CD8-positive, alpha-beta T cell (primary cell): ENCODE measurements at regions of chr4 and their contacts with region 1.

Region 1: DNA sequence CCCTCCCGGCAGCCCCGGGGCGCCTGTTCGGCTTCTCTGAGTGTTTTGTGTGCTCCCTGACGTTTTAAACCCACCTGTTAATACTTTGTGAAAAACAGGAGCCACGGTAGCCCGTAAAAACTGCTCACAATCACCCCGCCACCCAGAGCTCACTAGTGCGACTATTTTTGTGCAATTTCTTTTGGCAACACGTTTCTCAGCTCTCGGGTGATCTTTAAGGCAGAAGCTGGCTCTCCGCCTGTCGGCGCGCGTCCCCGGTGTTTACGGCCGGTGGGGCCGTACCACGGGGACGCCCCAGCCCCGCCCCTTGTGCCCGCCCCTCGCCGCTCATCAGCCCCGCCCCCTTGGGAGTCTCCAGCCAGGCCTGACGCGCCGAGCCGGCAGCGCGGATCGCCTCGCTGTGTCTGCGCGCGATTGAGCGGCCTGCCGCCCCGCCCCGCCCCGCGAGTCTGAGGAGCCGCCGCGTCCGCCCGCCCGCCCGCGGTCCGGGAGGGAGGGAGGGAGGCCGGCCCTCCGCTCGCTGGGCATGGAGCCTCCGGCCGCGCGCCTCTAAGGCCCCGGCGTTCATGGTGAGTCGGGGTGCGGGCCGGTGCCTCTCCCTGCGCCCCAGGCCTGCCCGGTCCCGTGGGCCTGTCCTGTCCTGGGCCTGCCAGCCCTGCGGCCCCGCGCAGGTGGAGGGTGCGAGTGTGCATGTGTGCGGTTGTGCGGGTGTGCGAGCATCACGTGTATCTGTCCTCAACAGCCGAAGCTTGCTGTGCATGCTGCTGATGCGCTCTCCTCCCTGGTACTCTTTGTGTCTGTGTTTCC is 56.2 kb upstream of the TADA2B start:
- DNase-seq: peak; percentile 87 to 97 (median 93)
- ATAC-seq: peak; percentile 92
- H3K4me3 ChIP-seq: peak overlapping the region; percentile 91 to 94
- H3K4me3 Mint-ChIP-seq: peak overlapping the region; percentile 94
- H3K27ac ChIP-seq: peak overlapping the region; percentile 78 to 88
- H3K27ac Mint-ChIP-seq: peak overlapping the region; percentile 98
- H3K4me1 ChIP-seq: peaks cover 55% of the 10 kb centered on the region
- H3K4me1 Mint-ChIP-seq: peaks cover 81% of the 10 kb centered on the region
- H3K27me3 ChIP-seq: no peaks in the 10 kb centered on the region
- H3K27me3 Mint-ChIP-seq: no peaks in the 10 kb centered on the region
- CTCF ChIP-seq: no peak

Region 2: GRCh38 chr4:6709230-6710114 is 277.5 kb before region 1 on chr4 and contains the start of gene MRFAP1L1:
- CTCF ChIA-PET with region 1: no interaction called
- POLR2A ChIA-PET with region 1: interaction called, 3 read pairs
- intact Hi-C with region 1: loop called in 1 of 2 experiments (anchors 2 kb)
- DNase-seq: peak; percentile 92 to 99 (median 97)
- ATAC-seq: peak; percentile 89
- H3K4me3 ChIP-seq: peak within 1 kb of the TSS; percentile 73 to 86
- H3K4me3 Mint-ChIP-seq: peak within 1 kb of the TSS; percentile 98
- H3K27ac ChIP-seq: peak within 1 kb of the TSS; percentile 79
- H3K27ac Mint-ChIP-seq: peak within 1 kb of the TSS; percentile 99
- H3K4me1 ChIP-seq: peaks cover 48% of the 10 kb centered on the region
- H3K4me1 Mint-ChIP-seq: peaks cover 65% of the 10 kb centered on the region
- H3K27me3 ChIP-seq: no peaks in the 10 kb centered on the region
- H3K27me3 Mint-ChIP-seq: no peaks in the 10 kb centered on the region
- CTCF ChIP-seq: no peak
- total RNA-seq, gene MRFAP1L1: 27.5 to 30.0 TPM

Region 3: DNA sequence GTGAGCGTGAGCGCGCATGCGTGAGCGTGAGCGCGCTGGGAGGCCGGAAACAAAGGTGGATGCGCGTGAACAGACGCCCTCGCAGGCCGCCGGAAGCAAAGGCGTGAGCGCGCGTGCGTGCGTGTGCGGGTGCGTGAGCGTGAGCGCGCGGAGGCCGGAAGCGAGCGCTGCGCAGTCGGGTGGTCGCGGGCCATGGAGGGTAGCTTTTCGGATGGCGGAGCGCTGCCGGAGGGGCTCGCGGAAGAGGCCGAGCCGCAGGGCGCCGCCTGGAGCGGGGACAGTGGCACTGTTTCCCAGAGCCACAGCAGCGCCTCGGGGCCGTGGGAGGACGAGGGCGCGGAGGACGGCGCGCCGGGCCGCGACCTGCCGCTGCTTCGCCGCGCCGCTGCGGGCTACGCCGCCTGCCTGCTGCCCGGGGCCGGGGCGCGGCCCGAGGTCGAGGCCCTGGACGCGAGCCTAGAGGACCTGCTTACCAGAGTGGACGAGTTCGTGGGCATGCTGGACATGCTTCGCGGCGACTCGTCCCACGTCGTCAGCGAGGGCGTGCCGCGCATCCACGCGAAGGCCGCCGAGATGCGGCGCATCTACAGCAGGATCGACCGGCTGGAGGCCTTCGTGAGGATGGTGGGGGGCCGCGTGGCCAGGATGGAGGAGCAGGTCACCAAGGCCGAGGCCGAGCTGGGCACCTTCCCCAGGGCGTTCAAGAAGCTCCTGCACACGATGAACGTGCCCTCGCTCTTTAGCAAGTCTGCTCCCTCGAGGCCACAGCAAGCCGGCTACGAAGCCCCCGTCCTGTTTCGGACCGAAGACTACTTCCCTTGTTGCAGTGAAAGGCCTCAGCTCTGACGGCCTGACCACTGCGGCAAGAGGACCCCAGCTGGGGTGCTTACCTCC is 270.7 kb before region 1 on chr4 and contains the start of gene BLOC1S4:
- CTCF ChIA-PET with region 1: interaction called, 3 read pairs
- POLR2A ChIA-PET with region 1: interaction called, 4 read pairs
- intact Hi-C with region 1: loop called (anchors 2 kb)
- DNase-seq: peak; percentile 77 to 98 (median 88)
- ATAC-seq: peak; percentile 83
- H3K4me3 ChIP-seq: peak within 1 kb of the TSS; percentile 74 to 81
- H3K4me3 Mint-ChIP-seq: peak within 1 kb of the TSS; percentile 95
- H3K27ac ChIP-seq: peak within 1 kb of the TSS; percentile 75 to 80
- H3K27ac Mint-ChIP-seq: peak within 1 kb of the TSS; percentile 97
- H3K4me1 ChIP-seq: peaks cover 25% of the 10 kb centered on the region
- H3K4me1 Mint-ChIP-seq: peaks cover 48% of the 10 kb centered on the region
- H3K27me3 ChIP-seq: no peaks in the 10 kb centered on the region
- H3K27me3 Mint-ChIP-seq: no peaks in the 10 kb centered on the region
- CTCF ChIP-seq: peak; percentile 18
- total RNA-seq, gene BLOC1S4: 29.7 to 30.7 TPM

Region 4: DNA sequence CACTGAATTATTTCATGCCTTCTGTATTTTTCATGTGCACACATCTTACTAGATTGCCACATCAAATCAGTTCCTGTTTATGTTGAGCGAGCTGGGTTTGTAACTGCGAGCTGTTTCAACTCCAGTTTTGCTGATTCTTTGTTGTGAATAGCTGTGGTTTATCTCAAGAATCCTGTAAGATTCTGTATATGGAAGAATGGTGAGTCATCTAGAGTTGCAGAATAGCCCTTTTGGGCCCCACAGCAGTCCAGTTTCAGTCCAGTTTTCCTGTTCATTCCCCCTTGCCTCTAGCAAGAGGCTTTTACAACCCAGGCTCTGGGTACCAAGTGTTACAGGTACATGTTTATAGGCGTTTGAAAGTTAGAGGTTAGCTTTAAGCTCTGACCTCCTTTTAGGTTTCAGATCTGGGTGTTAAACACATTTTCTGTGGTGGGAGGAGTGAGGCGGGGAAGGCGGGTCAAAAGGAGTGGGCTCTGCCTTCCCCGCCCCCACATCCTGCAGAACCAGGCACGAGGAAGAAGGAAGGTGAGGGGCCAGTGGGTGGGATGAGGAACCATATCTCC is 44.7 kb before region 1 on chr4:
- CTCF ChIA-PET with region 1: interaction called, 3 read pairs
- POLR2A ChIA-PET with region 1: interaction called, 10 read pairs
- intact Hi-C with region 1: loop called in 1 of 2 experiments (anchors 1 kb)
- DNase-seq: peak in 8 of 9 experiments; percentile 26 to 75 (median 50)
- ATAC-seq: peak; percentile 81
- H3K4me3 ChIP-seq: peak overlapping the region; percentile 25 to 30
- H3K4me3 Mint-ChIP-seq: peak overlapping the region; percentile 79
- H3K27ac ChIP-seq: peak overlapping the region; percentile 18 to 72
- H3K27ac Mint-ChIP-seq: peak overlapping the region; percentile 92
- H3K4me1 ChIP-seq: peaks cover 60% of the 10 kb centered on the region
- H3K4me1 Mint-ChIP-seq: peaks cover 83% of the 10 kb centered on the region
- H3K27me3 ChIP-seq: no peaks in the 10 kb centered on the region
- H3K27me3 Mint-ChIP-seq: no peaks in the 10 kb centered on the region
- CTCF ChIP-seq: no peak

Region 5: DNA sequence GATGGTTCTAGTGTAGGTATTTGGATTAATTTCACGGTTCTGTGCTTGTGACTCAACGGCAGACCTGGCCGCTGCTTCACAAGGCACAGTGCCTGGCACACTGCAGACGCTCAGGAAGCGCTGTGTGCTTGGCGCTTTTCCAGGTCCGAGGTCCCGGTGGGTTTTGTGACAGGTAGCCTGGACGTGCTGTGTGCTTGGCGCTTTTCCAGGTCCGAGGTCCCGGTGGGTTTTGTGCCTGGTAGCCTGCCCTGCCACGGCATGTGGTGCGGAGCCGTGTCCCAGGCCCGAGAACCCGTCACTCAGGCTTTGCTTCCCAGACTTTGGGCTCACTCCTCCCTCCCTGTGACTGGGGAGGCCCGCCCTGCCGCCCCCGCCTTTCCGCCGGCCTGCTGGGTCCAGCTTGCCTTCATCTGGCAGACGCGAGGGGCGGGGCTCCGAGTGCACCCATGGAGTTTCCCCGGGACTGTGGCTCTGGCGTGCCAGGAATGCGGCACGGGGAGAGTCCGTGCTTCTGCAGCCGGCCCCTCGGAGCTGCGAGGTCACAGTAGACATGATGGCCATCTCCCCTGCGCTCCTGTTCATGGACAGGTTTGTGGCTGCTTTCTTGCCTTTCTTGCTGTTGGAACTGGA is 33.1 kb before region 1 on chr4:
- CTCF ChIA-PET with region 1: no interaction called
- POLR2A ChIA-PET with region 1: no interaction called
- intact Hi-C with region 1: no loop called
- DNase-seq: no peak
- ATAC-seq: no peak
- H3K4me3 ChIP-seq: no peak overlapping the region
- H3K4me3 Mint-ChIP-seq: no peak overlapping the region
- H3K27ac ChIP-seq: no peak overlapping the region
- H3K27ac Mint-ChIP-seq: no peak overlapping the region
- H3K4me1 ChIP-seq: peaks cover 36% of the 10 kb centered on the region
- H3K4me1 Mint-ChIP-seq: peaks cover 68% of the 10 kb centered on the region
- H3K27me3 ChIP-seq: no peaks in the 10 kb centered on the region
- H3K27me3 Mint-ChIP-seq: no peaks in the 10 kb centered on the region
- CTCF ChIP-seq: no peak

Region 6: GRCh38 chr4:6974138-6974848 is 12.7 kb before region 1 on chr4:
- CTCF ChIA-PET with region 1: interaction called, 19 read pairs
- POLR2A ChIA-PET with region 1: interaction called, 4 read pairs
- intact Hi-C with region 1: loop called (anchors 1 kb)
- DNase-seq: peak; percentile 59 to 90 (median 85)
- ATAC-seq: peak; percentile 100
- H3K4me3 ChIP-seq: no peak overlapping the region
- H3K4me3 Mint-ChIP-seq: no peak overlapping the region
- H3K27ac ChIP-seq: no peak overlapping the region
- H3K27ac Mint-ChIP-seq: peak overlapping the region; percentile 18
- H3K4me1 ChIP-seq: peaks cover 8% of the 10 kb centered on the region
- H3K4me1 Mint-ChIP-seq: peaks cover 21% of the 10 kb centered on the region
- H3K27me3 ChIP-seq: no peaks in the 10 kb centered on the region
- H3K27me3 Mint-ChIP-seq: no peaks in the 10 kb centered on the region
- CTCF ChIP-seq: peak; percentile 85

Region 7: DNA sequence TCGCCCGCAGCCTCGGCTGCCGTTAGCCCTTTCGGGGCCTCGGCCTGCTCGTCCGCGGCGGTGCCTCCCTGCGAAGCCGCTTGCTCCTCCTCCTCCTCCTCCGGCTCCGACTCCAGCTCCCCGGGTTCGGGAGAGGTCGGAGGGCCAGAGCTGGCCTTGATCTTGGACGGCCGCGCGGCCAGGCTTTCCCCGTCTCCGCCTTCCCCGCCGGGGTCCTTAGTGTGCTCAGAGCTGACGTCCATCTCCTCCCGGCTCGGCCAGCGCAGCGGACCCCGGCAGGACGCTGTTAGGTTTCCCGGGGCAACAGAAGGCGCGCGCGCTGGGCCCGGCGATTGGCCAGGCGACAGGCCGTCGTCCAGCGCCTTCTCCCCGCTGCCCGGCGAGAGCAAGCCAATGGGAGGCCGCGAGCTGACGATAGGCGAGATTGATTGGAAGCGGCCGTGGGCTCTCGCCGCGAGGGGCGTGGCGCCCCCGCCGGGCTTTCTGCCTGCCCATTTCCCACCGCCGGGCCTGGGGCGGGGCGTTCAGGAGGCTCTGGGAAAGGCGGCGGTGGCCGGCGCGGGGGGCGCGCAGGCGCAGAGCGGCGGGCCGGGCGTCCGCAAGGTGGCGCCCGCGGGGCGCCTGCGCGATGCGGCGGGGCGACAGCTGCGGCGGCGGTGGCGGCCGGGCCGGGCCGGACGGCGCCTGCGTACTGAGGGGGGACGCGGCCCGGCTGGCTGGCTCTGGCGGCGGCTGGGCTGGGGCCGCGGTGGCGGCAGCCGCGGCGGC is 55.9 kb after region 1 on chr4 and contains the start of gene TADA2B:
- CTCF ChIA-PET with region 1: interaction called, 10 read pairs
- POLR2A ChIA-PET with region 1: interaction called, 15 read pairs
- intact Hi-C with region 1: loop called (anchors 1 to 2 kb)
- DNase-seq: peak; percentile 74 to 95 (median 89)
- ATAC-seq: peak; percentile 76
- H3K4me3 ChIP-seq: peak within 1 kb of the TSS; percentile 83 to 94
- H3K4me3 Mint-ChIP-seq: peak within 1 kb of the TSS; percentile 91
- H3K27ac ChIP-seq: peak within 1 kb of the TSS; percentile 63 to 84
- H3K27ac Mint-ChIP-seq: peak within 1 kb of the TSS; percentile 88
- H3K4me1 ChIP-seq: peaks cover 40% of the 10 kb centered on the region
- H3K4me1 Mint-ChIP-seq: peaks cover 44% of the 10 kb centered on the region
- H3K27me3 ChIP-seq: no peaks in the 10 kb centered on the region
- H3K27me3 Mint-ChIP-seq: no peaks in the 10 kb centered on the region
- CTCF ChIP-seq: no peak
- total RNA-seq, gene TADA2B: 41.9 to 45.4 TPM